ENCODE measurements at regions of chr13 and their contacts with region 1.

Region 1: GRCh38 chr13:39684531-39685137 is 29.2 kb downstream of the COG6 start:
- DNase-seq: no peak
- ATAC-seq: no peak
- H3K4me3 Mint-ChIP-seq: no peak overlapping the region
- H3K27ac Mint-ChIP-seq: no peak overlapping the region
- H3K4me1 Mint-ChIP-seq: peaks cover 21% of the 10 kb centered on the region
- H3K27me3 Mint-ChIP-seq: no peaks in the 10 kb centered on the region
- CTCF ChIP-seq: peak; percentile 59

Region 2: GRCh38 chr13:39777527-39778061 is 93.0 kb after region 1 on chr13:
- CTCF ChIA-PET with region 1: interaction called, 3 read pairs
- POLR2A ChIA-PET with region 1: no interaction called
- intact Hi-C with region 1: loop called (anchors 5 kb)
- DNase-seq: peak; percentile 72
- ATAC-seq: peak; percentile 83
- H3K4me3 Mint-ChIP-seq: no peak overlapping the region
- H3K27ac Mint-ChIP-seq: peak overlapping the region; percentile 94
- H3K4me1 Mint-ChIP-seq: peaks cover 57% of the 10 kb centered on the region
- H3K27me3 Mint-ChIP-seq: no peaks in the 10 kb centered on the region
- CTCF ChIP-seq: peak; percentile 60

Region 3: GRCh38 chr13:40682449-40683240 is 998.0 kb after region 1 on chr13:
- CTCF ChIA-PET with region 1: interaction called, 27 read pairs
- POLR2A ChIA-PET with region 1: no interaction called
- intact Hi-C with region 1: loop called (anchors 5 kb)
- DNase-seq: no peak
- ATAC-seq: peak; percentile 74
- H3K4me3 Mint-ChIP-seq: no peak overlapping the region
- H3K27ac Mint-ChIP-seq: no peak overlapping the region
- H3K4me1 Mint-ChIP-seq: peaks cover 7% of the 10 kb centered on the region
- H3K27me3 Mint-ChIP-seq: no peaks in the 10 kb centered on the region
- CTCF ChIP-seq: peak; percentile 78

Region 4: GRCh38 chr13:40770934-40771618 is 1086.4 kb after region 1 on chr13 and contains the start of gene MRPS31:
- CTCF ChIA-PET with region 1: no interaction called
- POLR2A ChIA-PET with region 1: no interaction called
- intact Hi-C with region 1: loop called (anchors 10 kb)
- DNase-seq: peak; percentile 96
- ATAC-seq: peak; percentile 99
- H3K4me3 Mint-ChIP-seq: peak within 1 kb of the TSS; percentile 97
- H3K27ac Mint-ChIP-seq: peak within 1 kb of the TSS; percentile 94
- H3K4me1 Mint-ChIP-seq: peaks cover 43% of the 10 kb centered on the region
- H3K27me3 Mint-ChIP-seq: no peaks in the 10 kb centered on the region
- CTCF ChIP-seq: no peak
- total RNA-seq, gene MRPS31: 41.0 to 44.7 TPM